Transverse colon (tissue), 4 donors: ENCODE measurements at regions of chr3 and their contacts with region 1.

Region 1: DNA sequence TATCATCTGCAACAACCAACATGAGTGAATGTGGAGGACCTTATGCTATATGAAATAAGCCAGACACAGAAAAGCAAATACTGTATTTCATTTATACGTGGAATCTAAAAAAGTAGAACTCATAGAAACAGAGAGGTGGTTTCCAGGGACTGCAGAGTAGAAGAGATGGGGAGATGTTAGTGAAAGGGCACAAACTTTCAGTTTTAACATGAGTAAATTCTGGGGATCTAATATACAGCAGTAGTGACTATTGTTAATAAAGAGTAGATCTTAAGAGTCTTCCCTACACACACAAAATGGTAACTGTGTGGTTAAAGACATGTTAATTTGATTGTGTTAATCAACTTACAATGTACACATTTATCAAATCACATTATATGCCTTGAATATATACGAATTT is 20.9 kb upstream of the MELTF start:
- DNase-seq: no peak
- H3K4me3 ChIP-seq: no peak overlapping the region
- H3K27ac ChIP-seq: no peak overlapping the region
- H3K4me1 ChIP-seq: no peaks in the 10 kb centered on the region
- H3K27me3 ChIP-seq: no peaks in the 10 kb centered on the region
- CTCF ChIP-seq: no peak
- EP300 ChIP-seq: no peak
- POLR2A ChIP-seq: no peak

Region 2: DNA sequence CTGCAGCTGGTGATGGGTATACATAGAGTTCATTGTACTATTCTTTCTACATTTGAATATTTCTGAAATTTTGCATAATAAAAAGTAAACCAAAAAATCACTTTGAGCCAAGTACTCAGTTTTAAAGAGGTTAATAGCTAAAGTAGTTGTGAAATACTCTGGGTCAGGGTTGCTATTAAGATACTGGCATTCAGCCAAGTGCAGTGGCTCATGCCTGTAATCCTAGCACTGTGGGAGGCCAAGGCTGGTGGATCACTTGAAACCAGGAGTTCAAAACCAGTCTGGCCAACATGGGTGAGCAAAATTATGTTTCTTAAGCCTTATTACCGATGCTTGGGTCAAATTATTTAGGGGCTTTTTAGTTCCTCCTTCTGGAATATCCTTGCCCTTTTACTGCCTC is 101.1 kb after region 1 on chr3:
- in situ Hi-C with region 1: loop called in 1 of 4 experiments (anchors 25 kb)
- intact Hi-C with region 1: no loop called
- DNase-seq: no peak
- H3K4me3 ChIP-seq: no peak overlapping the region
- H3K27ac ChIP-seq: no peak overlapping the region
- H3K4me1 ChIP-seq: peaks cover 0 to 6% (median 0%) of the 10 kb centered on the region in 4 donors
- H3K27me3 ChIP-seq: no peaks in the 10 kb centered on the region
- CTCF ChIP-seq: no peak
- EP300 ChIP-seq: no peak
- POLR2A ChIP-seq: no peak